ENCODE measurements at regions of chr16 and their contacts with region 1.

Region 1: GRCh38 chr16:21708533-21709115 is 44.9 kb downstream of the OTOA start:
- DNase-seq: peak; percentile 57
- ATAC-seq: peak; percentile 68
- H3K4me3 ChIP-seq: no peak overlapping the region
- H3K27ac ChIP-seq: no peak overlapping the region
- H3K4me1 ChIP-seq: no peaks in the 10 kb centered on the region
- H3K27me3 ChIP-seq: peaks cover 9% of the 10 kb centered on the region; the same call in 1 of the 2 replicates
- CTCF ChIP-seq: peak; percentile 82
- POLR2A ChIP-seq: no peak
- RAD21 ChIP-seq: peak; percentile 74

Region 2: DNA sequence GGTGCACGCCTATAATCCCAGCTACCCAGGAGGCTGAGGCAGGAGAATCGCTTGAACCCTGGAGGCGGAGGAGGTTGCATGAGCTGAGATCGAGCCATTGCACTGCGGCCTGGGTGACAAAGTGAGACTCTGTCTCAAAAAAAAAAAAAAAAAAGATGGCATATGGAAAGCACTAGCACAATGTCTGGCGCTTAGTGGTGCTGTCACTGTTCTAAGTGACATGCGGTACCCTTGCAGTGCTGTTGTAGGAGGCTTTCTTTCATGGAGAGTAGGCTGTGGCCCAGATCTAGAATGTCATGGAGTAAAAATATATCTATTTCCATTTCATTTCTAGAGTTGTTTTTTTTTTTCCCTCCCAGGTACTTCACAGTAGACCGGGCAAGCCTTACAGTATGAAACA is 123.8 kb before region 1 on chr16:
- CTCF ChIA-PET with region 1: interaction called, 4 read pairs
- POLR2A ChIA-PET with region 1: no interaction called
- dilution Hi-C with region 1: no loop called
- in situ Hi-C with region 1: loop called (anchors 10 kb)
- intact Hi-C with region 1: loop called (anchors 1 kb)
- DNase-seq: no peak
- ATAC-seq: no peak
- H3K4me3 ChIP-seq: no peak overlapping the region
- H3K27ac ChIP-seq: no peak overlapping the region
- H3K4me1 ChIP-seq: no peaks in the 10 kb centered on the region
- H3K27me3 ChIP-seq: peaks cover 2% of the 10 kb centered on the region; the same call in 1 of the 2 replicates
- CTCF ChIP-seq: no peak
- POLR2A ChIP-seq: no peak
- RAD21 ChIP-seq: no peak

Region 3: DNA sequence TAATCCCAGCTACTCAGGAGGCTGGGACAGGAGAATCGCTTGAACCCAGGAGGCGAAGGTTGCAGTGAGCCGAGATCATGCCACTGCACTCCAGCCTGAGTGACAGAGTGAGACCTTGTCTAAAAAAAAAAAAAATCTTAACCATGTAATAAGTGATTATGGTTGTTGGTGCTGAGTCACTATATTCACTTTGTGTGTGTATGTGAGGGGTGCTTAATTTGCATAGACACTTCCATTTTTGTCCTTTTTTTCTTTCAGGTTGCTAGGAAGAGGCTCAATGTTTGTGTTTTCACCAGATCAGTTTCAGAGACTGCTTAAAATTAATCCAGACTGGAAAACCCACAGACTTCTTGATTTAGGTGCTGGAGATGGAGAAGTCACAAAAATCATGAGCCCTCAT is 91.0 kb before region 1 on chr16:
- CTCF ChIA-PET with region 1: no interaction called
- POLR2A ChIA-PET with region 1: no interaction called
- dilution Hi-C with region 1: no loop called
- in situ Hi-C with region 1: no loop called
- intact Hi-C with region 1: no loop called
- DNase-seq: no peak
- ATAC-seq: no peak
- H3K4me3 ChIP-seq: no peak overlapping the region
- H3K27ac ChIP-seq: no peak overlapping the region
- H3K4me1 ChIP-seq: no peaks in the 10 kb centered on the region
- H3K27me3 ChIP-seq: no peaks in the 10 kb centered on the region
- CTCF ChIP-seq: no peak
- POLR2A ChIP-seq: no peak
- RAD21 ChIP-seq: no peak

Region 4: GRCh38 chr16:21656795-21657768 is 51.5 kb before region 1 on chr16:
- CTCF ChIA-PET with region 1: interaction called, 6 read pairs
- POLR2A ChIA-PET with region 1: no interaction called
- dilution Hi-C with region 1: no loop called
- in situ Hi-C with region 1: no loop called
- intact Hi-C with region 1: loop called (anchors 5 kb)
- DNase-seq: peak; percentile 67
- ATAC-seq: peak; percentile 68
- H3K4me3 ChIP-seq: no peak overlapping the region
- H3K27ac ChIP-seq: no peak overlapping the region
- H3K4me1 ChIP-seq: no peaks in the 10 kb centered on the region; the same call in 1 of the 2 replicates
- H3K27me3 ChIP-seq: no peaks in the 10 kb centered on the region
- CTCF ChIP-seq: peak; percentile 82
- POLR2A ChIP-seq: no peak
- RAD21 ChIP-seq: peak; percentile 71

Region 5: DNA sequence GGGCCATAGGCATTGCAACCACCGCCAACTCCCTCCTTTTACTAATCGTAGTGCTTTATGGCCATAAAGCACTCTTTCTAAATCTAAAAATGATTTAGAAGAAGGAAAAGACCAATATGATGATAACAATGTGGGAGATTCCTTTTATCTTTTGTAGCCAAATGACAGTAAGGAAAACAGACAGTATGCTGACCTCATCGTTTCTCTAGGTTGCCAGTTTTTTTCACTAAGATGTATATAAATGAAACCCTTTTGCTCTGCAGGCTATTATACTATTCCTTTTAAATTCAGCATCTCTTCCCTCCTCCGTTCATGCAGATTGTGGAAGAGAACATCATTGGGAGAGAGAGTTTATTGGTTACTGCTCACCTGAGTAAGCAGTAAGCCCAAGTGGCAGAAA is 19.5 kb before region 1 on chr16:
- CTCF ChIA-PET with region 1: no interaction called
- POLR2A ChIA-PET with region 1: no interaction called
- dilution Hi-C with region 1: no loop called
- in situ Hi-C with region 1: no loop called
- intact Hi-C with region 1: no loop called
- DNase-seq: no peak
- ATAC-seq: no peak
- H3K4me3 ChIP-seq: no peak overlapping the region
- H3K27ac ChIP-seq: no peak overlapping the region
- H3K4me1 ChIP-seq: no peaks in the 10 kb centered on the region
- H3K27me3 ChIP-seq: no peaks in the 10 kb centered on the region; the same call in 1 of the 2 replicates
- CTCF ChIP-seq: no peak
- POLR2A ChIP-seq: no peak
- RAD21 ChIP-seq: no peak